ENCODE measurements at regions of chr3 and their contacts with region 1.

Region 1: DNA sequence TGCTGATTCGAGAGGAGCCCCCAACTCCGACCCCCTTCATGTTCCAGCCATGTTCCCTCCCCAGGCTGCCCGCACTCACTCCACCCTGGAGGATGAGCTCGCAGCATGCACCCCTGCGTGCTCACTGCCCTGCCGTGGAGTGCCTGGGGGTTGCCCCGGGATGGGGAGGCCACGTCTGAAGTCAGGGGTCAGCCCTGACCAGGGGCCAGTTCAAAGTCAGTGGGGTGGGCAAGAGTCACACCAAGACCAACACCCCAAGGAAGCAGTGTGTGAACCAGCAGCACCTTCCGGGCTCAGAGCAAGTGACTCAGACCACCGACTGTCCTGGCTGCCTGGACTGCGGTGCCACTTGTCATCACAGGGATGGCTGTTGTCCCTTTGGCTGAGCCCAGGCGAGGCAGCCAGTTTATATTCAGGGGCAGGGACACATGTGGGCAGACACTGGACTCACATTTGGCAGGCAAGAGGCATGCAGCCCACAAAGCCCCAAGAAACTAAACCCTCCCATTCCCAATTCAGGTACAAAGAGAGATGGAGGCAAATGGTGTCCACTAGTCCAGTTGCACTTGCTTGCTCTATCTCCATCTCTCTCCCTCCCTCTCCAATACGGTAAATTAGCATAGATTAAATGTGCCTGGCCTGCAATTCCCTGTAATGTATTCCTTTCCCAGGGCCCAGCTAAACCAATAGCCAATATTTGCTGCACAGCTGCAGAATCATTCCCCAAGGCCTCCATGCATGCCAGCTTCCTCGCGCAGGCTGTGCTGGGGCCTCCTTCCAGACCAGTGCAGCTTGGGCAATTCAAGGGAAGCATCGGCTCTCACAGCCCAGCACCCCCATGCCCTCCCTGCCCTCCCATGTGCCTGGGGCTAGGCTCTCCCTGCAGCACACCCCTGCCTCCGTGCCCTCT is 135.8 kb upstream of the IQSEC1 start:
- DNase-seq: peak; percentile 66

Region 2: GRCh38 chr3:11591391-11592282 is 1617.3 kb before region 1 on chr3:
- intact Hi-C with region 1: loop called in 1 of 2 experiments (anchors 5 kb)
- DNase-seq: no peak

Region 3: DNA sequence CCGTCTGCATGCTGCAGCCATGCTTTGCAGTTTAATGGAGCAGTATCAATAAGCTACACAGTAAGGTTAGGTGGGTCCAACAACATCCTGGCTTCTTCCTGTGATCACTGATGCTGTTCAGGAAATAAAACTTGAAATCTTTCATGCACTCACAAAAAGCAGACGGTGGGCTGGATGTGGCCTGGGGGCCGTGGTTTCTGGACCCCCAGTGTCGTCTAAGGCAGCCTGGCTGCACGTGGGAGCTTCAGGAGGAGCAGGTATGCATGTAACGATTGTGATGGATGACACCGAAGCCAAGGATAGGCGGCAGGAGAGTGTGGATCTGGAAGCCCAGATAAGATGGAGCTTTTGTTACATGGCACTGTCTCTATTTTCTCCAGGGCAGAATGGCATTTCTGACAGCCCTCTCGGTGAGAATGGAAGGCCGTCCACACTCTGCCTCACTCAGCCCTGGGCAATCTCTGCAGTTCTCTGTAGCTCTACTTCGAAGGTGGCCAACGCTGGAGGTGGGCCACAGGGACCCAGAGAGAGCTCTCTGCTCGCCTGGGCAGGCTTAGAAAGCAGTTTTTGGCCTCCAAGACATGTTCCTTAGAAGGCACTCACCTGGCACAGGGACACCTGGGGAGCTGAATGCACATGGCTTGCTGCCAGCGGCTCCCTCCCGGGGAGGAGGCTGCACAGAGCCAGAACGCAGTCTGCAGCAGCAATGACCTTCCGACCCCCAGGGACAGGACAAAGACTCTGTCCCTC is 89.3 kb before region 1 on chr3:
- intact Hi-C with region 1: loop called in 1 of 2 experiments (anchors 5 kb)
- DNase-seq: peak; percentile 71

Region 4: GRCh38 chr3:13189639-13190377 is 19.2 kb before region 1 on chr3:
- intact Hi-C with region 1: no loop called
- DNase-seq: peak; percentile 74